Endothelial cell of umbilical vein (primary cell): ENCODE measurements at regions of chr5 and their contacts with region 1.

Region 1: DNA sequence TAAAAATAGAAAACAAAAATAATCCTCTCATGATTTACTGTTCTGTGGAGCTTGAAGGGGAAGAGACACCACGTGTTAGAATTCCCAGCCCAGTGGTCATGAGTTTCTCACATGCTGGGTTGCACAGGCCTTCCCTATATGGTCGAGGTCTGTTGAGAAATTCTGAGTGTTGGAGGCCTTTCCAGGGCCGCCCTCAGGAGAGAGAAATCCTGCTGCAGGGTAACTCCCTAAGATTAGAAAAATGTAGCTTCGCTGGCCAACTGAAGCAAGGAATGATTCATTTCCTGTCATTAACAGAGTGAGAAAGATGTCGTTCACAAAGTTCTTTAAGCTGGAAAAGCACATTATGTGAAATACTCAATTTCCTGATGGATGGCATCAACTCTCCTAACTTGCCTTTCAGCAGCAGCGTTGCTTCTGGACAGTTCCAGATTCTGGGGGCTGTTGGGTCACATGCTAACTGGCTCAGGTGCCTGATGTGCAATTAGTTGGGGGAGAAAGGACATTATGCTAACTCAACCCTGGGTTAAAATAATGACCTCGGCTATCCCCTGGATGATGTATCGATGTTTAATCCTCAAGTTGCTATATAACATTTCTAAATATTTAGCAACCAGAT is 104.8 kb upstream of the CD180 start:
- DNase-seq: peak; percentile 88
- H3K4me3 ChIP-seq: no peak overlapping the region
- H3K27ac ChIP-seq: peak overlapping the region; percentile 90
- H3K4me1 ChIP-seq: peaks cover 56% of the 10 kb centered on the region
- H3K27me3 ChIP-seq: no peaks in the 10 kb centered on the region
- CTCF ChIP-seq: no peak
- POLR2A ChIP-seq: peak; percentile 20

Region 2: GRCh38 chr5:67003935-67004729 is 297.3 kb before region 1 on chr5:
- CTCF ChIA-PET with region 1: no interaction called
- POLR2A ChIA-PET with region 1: no interaction called
- dilution Hi-C with region 1: no loop called
- intact Hi-C with region 1: loop called (anchors 10 kb)
- DNase-seq: peak; percentile 99
- H3K4me3 ChIP-seq: peak overlapping the region; percentile 52 to 93 (median 87)
- H3K27ac ChIP-seq: peak overlapping the region; percentile 94
- H3K4me1 ChIP-seq: peaks cover 37% of the 10 kb centered on the region
- H3K27me3 ChIP-seq: no peaks in the 10 kb centered on the region
- CTCF ChIP-seq: no peak
- POLR2A ChIP-seq: peak; percentile 95

Region 3: DNA sequence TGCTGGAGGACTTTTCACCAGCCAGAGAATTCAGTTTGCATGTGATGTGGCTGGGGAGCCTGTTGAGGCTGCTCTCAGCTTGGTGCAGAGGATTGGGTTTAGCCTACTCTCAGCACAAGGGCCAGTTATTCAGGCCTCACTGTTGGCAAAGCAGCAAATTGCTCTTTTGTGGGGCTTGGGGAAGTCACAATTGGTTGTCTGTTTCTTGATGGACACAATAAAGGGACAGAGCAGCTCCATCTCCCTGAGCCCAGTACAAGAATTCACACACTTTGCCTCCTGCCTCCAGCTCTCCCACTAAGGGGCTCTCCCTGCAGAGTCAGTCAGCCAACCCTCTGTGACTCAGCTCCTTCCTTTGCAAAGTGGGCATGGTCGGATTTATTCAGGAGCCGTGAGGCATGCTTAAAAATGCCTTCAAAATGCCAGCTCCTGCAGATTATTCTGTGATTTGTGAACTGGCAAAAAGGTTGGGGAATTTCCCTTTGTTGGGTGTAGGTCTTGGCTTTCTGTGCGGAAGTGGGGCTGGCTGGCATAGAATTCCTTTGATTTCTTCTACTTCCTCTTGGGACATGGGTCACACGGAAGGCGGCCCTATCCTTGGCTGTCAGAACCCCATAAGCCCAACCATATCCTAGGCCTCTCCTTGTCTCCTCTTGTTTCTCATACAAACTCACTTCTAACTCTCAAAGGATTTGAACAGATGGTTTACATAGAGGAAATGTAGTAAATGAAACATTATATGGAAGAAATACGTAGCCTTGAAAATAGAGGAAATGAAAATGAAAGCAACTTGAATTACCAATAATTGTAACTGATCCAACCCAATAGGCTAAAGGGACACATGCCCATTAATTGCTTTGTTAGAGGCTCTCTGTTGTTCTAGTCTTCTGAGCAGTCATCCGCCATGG is 13.9 kb after region 1 on chr5:
- CTCF ChIA-PET with region 1: interaction called, 12 read pairs
- POLR2A ChIA-PET with region 1: no interaction called
- dilution Hi-C with region 1: no loop called
- intact Hi-C with region 1: loop called (anchors 1 kb)
- DNase-seq: peak; percentile 81
- H3K4me3 ChIP-seq: peak overlapping the region in 1 of 3 experiments; percentile 24
- H3K27ac ChIP-seq: peak overlapping the region; percentile 75
- H3K4me1 ChIP-seq: peaks cover 14% of the 10 kb centered on the region
- H3K27me3 ChIP-seq: no peaks in the 10 kb centered on the region
- CTCF ChIP-seq: no peak
- POLR2A ChIP-seq: no peak

Region 4: DNA sequence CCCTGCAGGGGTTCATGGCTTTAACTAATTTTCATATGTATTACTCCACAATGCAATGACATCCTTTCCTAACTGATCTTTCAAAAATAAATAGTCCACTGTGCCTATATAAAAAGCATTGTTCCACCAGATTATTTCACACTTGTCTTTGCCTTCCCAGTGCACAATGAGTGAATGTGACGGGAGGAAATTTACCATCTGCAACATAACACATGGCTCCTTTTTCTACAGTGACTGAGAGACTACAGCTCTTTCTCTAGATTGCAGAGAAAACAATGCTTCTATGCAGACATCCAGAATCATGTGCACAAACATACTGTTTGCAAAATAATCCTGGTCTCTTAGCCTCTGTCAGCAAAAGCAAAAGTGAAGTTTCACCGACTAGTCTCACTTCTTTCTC is 430.5 kb after region 1 on chr5:
- CTCF ChIA-PET with region 1: no interaction called
- POLR2A ChIA-PET with region 1: no interaction called
- dilution Hi-C with region 1: no loop called
- intact Hi-C with region 1: loop called (anchors 5 kb)
- DNase-seq: no peak
- H3K4me3 ChIP-seq: no peak overlapping the region
- H3K27ac ChIP-seq: no peak overlapping the region
- H3K4me1 ChIP-seq: peaks cover 32% of the 10 kb centered on the region
- H3K27me3 ChIP-seq: no peaks in the 10 kb centered on the region
- CTCF ChIP-seq: no peak
- POLR2A ChIP-seq: no peak

Region 5: DNA sequence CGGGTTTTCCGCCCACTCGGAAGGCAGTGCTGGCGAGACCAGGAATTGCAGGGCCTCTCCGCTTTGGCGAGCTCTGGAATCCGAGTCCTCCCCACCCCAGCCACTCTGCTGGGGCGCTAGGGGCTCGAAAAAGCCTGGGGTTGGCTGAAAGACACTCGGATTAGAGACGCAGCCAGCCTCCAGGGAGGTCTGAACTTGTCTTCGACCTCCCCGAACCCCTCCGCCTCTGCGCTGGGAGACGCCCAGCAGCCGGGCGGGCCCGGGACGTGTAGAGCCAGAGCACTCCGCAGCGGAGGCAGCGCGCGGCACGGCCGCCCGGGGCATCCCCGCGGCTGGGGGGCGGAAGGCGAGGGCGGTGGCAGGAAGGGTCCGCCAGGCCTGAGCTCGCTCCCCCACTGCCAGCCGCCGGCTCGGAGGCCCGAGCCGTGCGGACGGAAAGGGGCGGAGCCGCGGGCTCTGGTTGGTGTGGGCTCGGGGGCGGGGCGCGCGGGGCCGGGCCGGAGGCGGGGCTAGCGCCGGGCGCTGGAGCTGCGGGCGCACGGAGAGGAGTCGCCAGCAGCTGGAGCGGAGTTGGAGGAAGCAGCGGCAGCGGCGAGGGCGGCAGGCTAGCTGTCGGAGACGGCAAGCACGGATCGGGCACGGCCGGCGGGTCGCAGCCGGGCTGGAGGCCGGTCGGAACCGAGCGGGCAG is 914.0 kb after region 1 on chr5 and contains the start of gene PIK3R1:
- CTCF ChIA-PET with region 1: no interaction called
- POLR2A ChIA-PET with region 1: no interaction called
- dilution Hi-C with region 1: no loop called
- intact Hi-C with region 1: loop called (anchors 10 kb)
- DNase-seq: peak; percentile 96
- H3K4me3 ChIP-seq: peak within 1 kb of the TSS; percentile 52 to 91 (median 91)
- H3K27ac ChIP-seq: peak within 1 kb of the TSS; percentile 93
- H3K4me1 ChIP-seq: peaks cover 17% of the 10 kb centered on the region
- H3K27me3 ChIP-seq: no peaks in the 10 kb centered on the region
- CTCF ChIP-seq: peak; percentile 32 to 49
- POLR2A ChIP-seq: peak; percentile 93
- total RNA-seq, gene PIK3R1: 27.5 and 30.0 TPM in 2 replicates